Activated T-helper 2 cell treated with anti-CD3 and anti-CD28 coated beads, Interferon-gamma antibody, Interleukin-2, Interleukin-4, amounts not matched to agents 10 μg/mL and 5 μg/mL and 100 μg/mL, durations not matched to agents 14 hours and 24 hours and 36 hours (primary cell): ENCODE measurements at regions of chr6 and their contacts with region 1.

Region 1: GRCh38 chr6:128259730-128260685 is 260.4 kb downstream of the PTPRK start:
- DNase-seq: no peak
- H3K4me3 Mint-ChIP-seq: peak overlapping the region; percentile 46
- H3K27ac Mint-ChIP-seq: no peak overlapping the region
- H3K4me1 Mint-ChIP-seq: peaks cover 18% of the 10 kb centered on the region
- H3K27me3 Mint-ChIP-seq: peaks cover 21% of the 10 kb centered on the region

Region 2: DNA sequence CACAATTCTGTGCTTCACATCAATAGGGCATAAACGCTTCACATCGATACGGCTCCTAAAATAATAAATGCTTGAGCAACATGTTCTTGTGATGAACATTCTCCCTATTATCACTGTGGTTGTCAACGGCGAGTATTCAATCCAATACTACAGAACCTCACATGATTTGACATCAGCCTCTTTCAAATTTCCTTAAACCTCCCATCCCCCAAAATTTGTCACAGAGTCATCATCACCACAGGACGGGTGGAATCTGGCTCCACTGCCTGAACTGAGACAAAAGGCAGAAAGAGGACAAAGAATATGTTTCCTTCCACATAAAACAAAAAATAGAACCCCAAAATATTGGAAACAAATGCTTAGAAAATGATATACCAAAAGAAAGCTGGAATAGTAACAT is 366.5 kb before region 1 on chr6:
- intact Hi-C with region 1: loop called (anchors 5 kb)
- DNase-seq: no peak
- H3K4me3 Mint-ChIP-seq: peak overlapping the region; percentile 60
- H3K27ac Mint-ChIP-seq: peak overlapping the region; percentile 69
- H3K4me1 Mint-ChIP-seq: peaks cover 45% of the 10 kb centered on the region
- H3K27me3 Mint-ChIP-seq: no peaks in the 10 kb centered on the region

Region 3: DNA sequence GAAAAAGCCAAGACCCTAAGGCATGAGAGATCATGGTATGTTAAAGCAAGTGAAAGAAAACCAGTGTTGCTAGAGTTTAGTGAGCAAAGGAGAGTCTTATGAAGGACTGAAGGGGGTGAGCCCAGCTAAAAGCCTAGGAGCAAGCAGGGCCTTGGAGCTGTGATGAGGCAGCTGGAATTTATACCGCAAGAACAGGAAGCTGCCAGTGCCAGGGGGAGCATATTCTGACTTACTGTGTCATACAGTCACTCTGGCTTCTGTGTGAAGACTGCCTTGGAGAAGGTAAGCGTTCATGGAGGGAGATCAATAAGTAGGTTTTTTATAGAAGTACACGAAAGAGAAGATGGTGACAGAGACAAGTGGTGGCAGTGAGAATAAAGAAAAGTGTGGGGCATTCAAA is 50.2 kb before region 1 on chr6:
- intact Hi-C with region 1: no loop called
- DNase-seq: no peak
- H3K4me3 Mint-ChIP-seq: no peak overlapping the region
- H3K27ac Mint-ChIP-seq: no peak overlapping the region
- H3K4me1 Mint-ChIP-seq: no peaks in the 10 kb centered on the region
- H3K27me3 Mint-ChIP-seq: peaks cover 4% of the 10 kb centered on the region

Region 4: DNA sequence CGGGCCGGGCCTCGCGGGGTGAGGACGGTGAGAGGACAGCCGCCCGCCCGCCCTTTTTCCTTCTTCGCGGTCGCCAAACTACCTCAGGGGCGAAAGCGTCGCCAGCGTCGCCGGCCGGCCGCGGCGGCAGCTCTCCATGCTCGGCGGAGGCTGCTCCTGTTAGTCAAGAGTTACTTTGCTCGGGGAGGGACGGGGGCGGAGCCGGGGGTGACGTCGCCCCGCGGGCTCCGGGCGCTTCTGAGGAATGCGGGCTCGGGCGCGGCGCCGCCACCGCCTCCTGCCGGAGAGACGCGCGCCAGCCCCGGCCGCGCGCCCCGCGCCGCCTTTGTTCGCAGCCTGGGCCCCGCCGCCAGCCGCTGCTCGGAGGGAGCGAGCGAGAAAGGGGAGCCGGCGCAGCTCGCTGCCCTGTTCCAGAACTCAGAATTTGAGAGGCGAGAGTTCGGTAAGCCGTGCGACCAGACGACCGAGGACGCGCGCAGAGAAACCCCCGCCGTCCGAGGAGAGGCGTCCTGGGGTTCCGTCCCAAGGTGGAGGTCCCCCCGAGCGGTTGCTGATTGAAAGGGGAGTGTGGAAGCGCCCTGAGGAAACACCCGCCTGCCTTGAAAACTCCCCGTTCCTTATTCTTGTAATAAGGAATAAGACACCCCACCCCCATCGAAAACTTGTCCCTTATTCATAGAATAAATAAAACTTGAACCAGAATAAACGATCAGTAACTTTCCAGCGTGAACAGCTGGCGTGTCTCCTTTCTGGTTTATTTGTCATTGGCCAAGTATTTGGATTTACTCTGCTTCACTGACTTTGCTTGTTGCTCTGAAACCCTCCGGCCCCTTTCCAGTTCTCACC is 260.7 kb after region 1 on chr6 and contains the start of gene PTPRK:
- intact Hi-C with region 1: loop called (anchors 10 kb)
- DNase-seq: peak; percentile 80
- H3K4me3 Mint-ChIP-seq: peak within 1 kb of the TSS; percentile 90
- H3K27ac Mint-ChIP-seq: peak within 1 kb of the TSS; percentile 74
- H3K4me1 Mint-ChIP-seq: peaks cover 11% of the 10 kb centered on the region
- H3K27me3 Mint-ChIP-seq: peaks cover 74% of the 10 kb centered on the region
- total RNA-seq, gene PTPRK: 4.2 and 6.1 TPM in 2 replicates